ENCODE measurements at regions of chr12 and their contacts with region 1.

Region 1: DNA sequence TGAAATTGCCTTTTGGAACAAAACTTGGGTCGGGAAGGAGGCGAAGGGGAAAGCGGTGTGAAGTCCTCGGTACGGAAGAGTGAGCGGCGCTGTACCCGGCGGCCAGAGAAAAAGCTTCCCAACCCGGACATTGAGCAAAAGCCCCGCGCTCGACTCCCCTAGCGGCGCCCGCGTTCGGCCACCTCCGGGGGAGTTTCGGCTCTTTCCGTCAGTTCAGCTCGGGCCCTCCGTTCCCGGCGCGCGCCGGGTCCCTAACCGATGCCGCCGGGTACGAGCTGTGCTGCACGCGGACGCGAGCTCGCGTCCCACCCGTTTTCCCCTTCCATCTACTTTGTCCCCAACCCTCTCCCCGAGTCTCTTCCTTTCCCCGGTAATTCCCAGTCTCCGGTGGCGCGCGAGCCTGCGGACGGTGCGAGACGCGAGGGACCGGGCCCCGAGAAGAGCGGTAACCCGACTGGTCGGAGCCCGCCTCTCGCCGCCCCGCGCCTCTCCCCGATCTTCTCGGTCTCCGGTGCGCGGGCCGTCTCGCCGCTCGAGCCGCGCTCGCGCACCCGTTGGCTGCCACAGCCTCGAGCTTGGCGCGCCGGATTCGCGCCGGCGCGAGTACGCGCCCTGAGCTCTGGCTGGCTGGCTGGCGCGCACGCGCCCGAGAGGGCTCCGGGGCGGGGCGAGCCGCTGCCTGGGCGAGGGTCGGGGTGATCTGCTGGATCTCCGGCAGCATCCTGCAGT is 446 bp upstream of the SPATS2 start:
- DNase-seq: peak; percentile 90
- H3K4me3 Mint-ChIP-seq: peak overlapping the region; percentile 95
- H3K27ac Mint-ChIP-seq: peak overlapping the region; percentile 95
- H3K4me1 Mint-ChIP-seq: peaks cover 23% of the 10 kb centered on the region
- H3K27me3 Mint-ChIP-seq: no peaks in the 10 kb centered on the region

Region 2: DNA sequence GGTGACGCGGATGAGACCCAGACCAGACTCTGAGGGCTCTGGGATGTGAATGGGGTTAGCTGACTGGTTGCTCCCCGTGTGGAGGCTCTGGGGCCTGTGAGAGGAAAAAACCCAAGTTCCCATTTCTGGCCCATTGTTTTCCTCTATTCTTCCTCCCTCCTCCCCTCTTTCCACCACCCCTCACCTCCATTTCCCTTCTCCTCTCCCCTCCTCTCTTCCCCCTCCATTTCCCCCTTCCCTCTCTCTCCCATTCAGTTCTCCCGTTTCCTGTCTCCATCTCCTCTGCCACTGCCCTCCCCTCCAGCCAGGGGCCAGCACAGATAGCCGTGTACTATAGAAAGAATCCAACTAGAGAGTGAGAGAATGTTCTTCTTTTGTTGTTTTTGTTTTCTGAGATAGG is 84.5 kb before region 1 on chr12:
- CTCF ChIA-PET with region 1: no interaction called
- intact Hi-C with region 1: no loop called
- DNase-seq: no peak
- H3K4me3 Mint-ChIP-seq: no peak overlapping the region
- H3K27ac Mint-ChIP-seq: no peak overlapping the region
- H3K4me1 Mint-ChIP-seq: no peaks in the 10 kb centered on the region
- H3K27me3 Mint-ChIP-seq: peaks cover 5% of the 10 kb centered on the region

Region 3: DNA sequence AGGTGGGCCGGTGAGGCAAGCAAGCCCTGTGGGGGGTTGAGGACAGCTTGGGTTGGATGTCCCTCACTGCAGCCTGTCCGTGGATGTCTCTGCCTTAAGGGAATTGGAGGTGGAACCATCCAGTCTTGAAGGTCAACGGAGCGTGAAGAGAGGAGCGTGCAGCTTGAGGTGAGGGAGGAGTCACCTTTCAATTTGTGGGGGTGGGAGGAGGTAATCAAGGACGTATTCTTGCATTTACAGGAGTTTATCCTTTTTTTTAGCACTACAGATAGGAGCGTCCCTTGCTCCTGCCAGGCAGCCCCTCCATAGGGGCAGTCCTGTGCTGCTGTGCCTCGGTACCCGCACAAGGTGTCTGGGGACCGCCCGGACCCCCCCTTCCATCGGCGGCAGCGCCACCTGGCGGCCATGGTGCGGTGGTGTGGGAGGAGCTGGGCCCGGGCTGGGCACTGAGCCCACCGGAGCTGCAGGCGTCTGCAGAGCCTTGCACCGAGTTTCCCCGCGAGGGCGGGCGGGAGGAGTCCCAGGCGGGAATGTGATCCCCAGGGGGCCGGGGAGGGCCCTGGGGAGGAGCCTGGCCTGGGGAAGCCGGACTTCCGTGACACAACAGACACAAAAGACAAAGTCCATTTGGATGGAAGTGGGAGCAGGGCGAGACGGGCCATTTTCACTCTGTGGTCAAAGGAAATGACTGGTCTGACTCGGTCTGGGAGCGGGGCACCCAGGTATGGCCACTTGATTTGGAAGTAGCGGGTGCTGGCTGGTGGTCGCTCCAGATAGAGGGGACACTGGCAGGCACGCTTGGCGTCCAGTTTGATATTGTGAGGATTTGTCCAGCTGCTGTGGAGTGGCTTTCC is 19.2 kb before region 1 on chr12:
- CTCF ChIA-PET with region 1: interaction called, 10 read pairs
- intact Hi-C with region 1: loop called (anchors 2 kb)
- DNase-seq: peak; percentile 77
- H3K4me3 Mint-ChIP-seq: peak overlapping the region; percentile 58
- H3K27ac Mint-ChIP-seq: no peak overlapping the region
- H3K4me1 Mint-ChIP-seq: peaks cover 41% of the 10 kb centered on the region
- H3K27me3 Mint-ChIP-seq: peaks cover 58% of the 10 kb centered on the region

Region 4: DNA sequence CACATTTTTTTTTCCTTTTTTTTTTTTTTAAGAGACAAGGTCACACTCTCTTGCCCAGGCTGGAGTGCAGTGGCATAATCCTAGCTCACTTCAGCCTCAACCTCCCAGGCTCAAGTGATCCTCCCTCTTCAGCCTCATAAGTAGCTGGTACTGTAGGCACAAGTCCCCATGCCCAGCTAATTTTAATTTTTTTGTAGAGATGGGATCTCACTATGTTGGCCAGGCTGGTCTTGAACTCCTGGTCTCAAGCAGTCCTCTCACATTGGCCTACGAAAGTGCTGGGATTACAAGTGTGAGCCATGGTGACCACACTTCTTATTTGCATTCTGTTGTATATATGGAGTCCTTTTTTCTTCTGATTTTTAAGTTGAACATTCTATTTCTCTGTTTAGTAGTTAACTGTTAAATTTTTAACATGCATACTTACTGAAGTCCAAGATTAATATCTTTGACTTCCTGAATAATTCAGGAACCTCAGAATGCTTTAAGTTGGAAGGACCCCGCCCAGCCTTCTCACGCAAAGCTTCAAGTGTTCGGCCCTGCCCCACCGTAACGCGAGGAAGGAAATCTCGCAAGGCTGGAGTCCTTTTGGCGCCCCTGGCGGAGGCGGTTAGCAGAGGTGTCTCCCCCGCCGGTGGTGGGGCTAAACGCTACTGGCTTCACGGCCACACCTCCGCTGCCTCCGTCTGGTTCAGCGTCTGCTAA is 22.0 kb after region 1 on chr12:
- CTCF ChIA-PET with region 1: interaction called, 3 read pairs
- intact Hi-C with region 1: loop called (anchors 2 kb)
- DNase-seq: peak; percentile 78
- H3K4me3 Mint-ChIP-seq: peak overlapping the region; percentile 45
- H3K27ac Mint-ChIP-seq: no peak overlapping the region
- H3K4me1 Mint-ChIP-seq: peaks cover 4% of the 10 kb centered on the region
- H3K27me3 Mint-ChIP-seq: no peaks in the 10 kb centered on the region

Region 5: GRCh38 chr12:49451468-49452259 is 84.8 kb after region 1 on chr12:
- CTCF ChIA-PET with region 1: no interaction called
- intact Hi-C with region 1: loop called (anchors 5 kb)
- DNase-seq: no peak
- H3K4me3 Mint-ChIP-seq: no peak overlapping the region
- H3K27ac Mint-ChIP-seq: peak overlapping the region; percentile 78
- H3K4me1 Mint-ChIP-seq: peaks cover 22% of the 10 kb centered on the region
- H3K27me3 Mint-ChIP-seq: no peaks in the 10 kb centered on the region

Region 6: GRCh38 chr12:49537231-49537751 is 170.5 kb after region 1 on chr12:
- CTCF ChIA-PET with region 1: interaction called, 16 read pairs
- intact Hi-C with region 1: no loop called
- DNase-seq: no peak
- H3K4me3 Mint-ChIP-seq: peak overlapping the region; percentile 56
- H3K27ac Mint-ChIP-seq: no peak overlapping the region
- H3K4me1 Mint-ChIP-seq: peaks cover 7% of the 10 kb centered on the region
- H3K27me3 Mint-ChIP-seq: peaks cover 26% of the 10 kb centered on the region

Region 7: GRCh38 chr12:49828133-49829091 is 461.6 kb after region 1 on chr12 and contains the start of gene NCKAP5L:
- CTCF ChIA-PET with region 1: no interaction called
- intact Hi-C with region 1: loop called (anchors 5 kb)
- DNase-seq: peak; percentile 94
- H3K4me3 Mint-ChIP-seq: peak within 1 kb of the TSS; percentile 92
- H3K27ac Mint-ChIP-seq: peak within 1 kb of the TSS; percentile 86
- H3K4me1 Mint-ChIP-seq: peaks cover 27% of the 10 kb centered on the region
- H3K27me3 Mint-ChIP-seq: no peaks in the 10 kb centered on the region
- total RNA-seq, gene NCKAP5L: 2.8 TPM